A673 (cell line): ENCODE measurements at regions of chr3 and their contacts with region 1.

Region 1: GRCh38 chr3:85360742-85361387 is 402.1 kb downstream of the CADM2 start:
- DNase-seq: peak; percentile 70
- H3K4me3 ChIP-seq: no peak overlapping the region
- H3K27ac ChIP-seq: no peak overlapping the region
- H3K4me1 ChIP-seq: no peaks in the 10 kb centered on the region
- H3K27me3 ChIP-seq: no peaks in the 10 kb centered on the region
- CTCF ChIP-seq: peak; percentile 66

Region 2: GRCh38 chr3:84974347-84974746 is 386.5 kb before region 1 on chr3:
- CTCF ChIA-PET with region 1: no interaction called
- POLR2A ChIA-PET with region 1: no interaction called
- intact Hi-C with region 1: loop called (anchors 10 kb)
- DNase-seq: no peak
- H3K4me3 ChIP-seq: no peak overlapping the region
- H3K27ac ChIP-seq: no peak overlapping the region
- H3K4me1 ChIP-seq: no peaks in the 10 kb centered on the region
- H3K27me3 ChIP-seq: no peaks in the 10 kb centered on the region
- CTCF ChIP-seq: peak; percentile 34; the same call in 1 of the 2 replicates

Region 3: DNA sequence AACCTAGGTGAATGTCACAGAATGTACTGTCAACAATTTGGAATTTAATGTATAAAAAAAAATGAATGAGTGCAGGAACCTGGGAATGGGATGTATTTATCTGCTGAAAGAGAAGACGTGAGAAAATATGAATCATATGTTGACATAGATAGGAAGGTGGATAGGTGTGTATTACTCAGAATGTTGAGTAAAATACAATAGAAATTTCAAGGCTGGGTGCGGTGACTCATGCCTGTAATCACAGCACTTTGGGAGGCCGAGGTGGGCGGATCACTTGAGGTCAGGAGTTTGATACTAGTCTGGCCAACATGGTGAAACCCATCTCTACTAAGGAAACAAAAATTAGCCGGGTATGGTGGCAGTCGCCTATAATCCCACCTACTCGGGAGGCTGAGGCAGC is 199.3 kb before region 1 on chr3:
- CTCF ChIA-PET with region 1: no interaction called
- POLR2A ChIA-PET with region 1: no interaction called
- intact Hi-C with region 1: no loop called
- DNase-seq: no peak
- H3K4me3 ChIP-seq: no peak overlapping the region
- H3K27ac ChIP-seq: no peak overlapping the region
- H3K4me1 ChIP-seq: no peaks in the 10 kb centered on the region
- H3K27me3 ChIP-seq: no peaks in the 10 kb centered on the region
- CTCF ChIP-seq: no peak

Region 4: GRCh38 chr3:85330071-85330470 is 30.8 kb before region 1 on chr3:
- CTCF ChIA-PET with region 1: no interaction called
- POLR2A ChIA-PET with region 1: no interaction called
- intact Hi-C with region 1: no loop called
- DNase-seq: no peak
- H3K4me3 ChIP-seq: no peak overlapping the region
- H3K27ac ChIP-seq: no peak overlapping the region
- H3K4me1 ChIP-seq: no peaks in the 10 kb centered on the region
- H3K27me3 ChIP-seq: no peaks in the 10 kb centered on the region
- CTCF ChIP-seq: no peak

Region 5: DNA sequence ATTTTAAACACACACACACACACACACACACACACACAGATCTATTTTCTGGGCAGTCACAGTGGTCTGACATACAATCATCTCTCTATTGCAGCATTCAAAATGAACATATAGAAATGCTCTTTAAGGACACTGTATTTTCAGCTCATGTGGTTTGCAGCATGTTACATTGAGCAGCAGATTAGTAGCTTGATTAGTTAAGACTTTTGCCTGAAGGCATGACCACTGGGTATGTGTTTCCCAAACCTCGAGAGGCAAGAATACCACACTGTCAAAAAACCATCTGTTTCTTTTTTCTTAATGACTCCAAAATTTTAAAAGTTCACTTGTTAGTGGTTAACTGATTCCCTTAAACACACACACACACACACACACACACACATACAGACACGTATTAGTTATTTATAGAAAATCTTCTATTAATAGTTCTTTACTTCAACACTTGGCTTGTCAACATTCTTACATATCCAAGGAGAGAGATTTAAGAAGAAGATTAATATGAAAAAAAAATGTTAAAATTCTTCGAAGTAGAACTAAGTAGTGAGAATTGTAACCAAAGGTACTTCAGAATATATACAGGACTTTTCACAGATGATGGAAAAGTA is 116.1 kb after region 1 on chr3:
- CTCF ChIA-PET with region 1: no interaction called
- POLR2A ChIA-PET with region 1: no interaction called
- intact Hi-C with region 1: no loop called
- DNase-seq: no peak
- H3K4me3 ChIP-seq: no peak overlapping the region
- H3K27ac ChIP-seq: no peak overlapping the region
- H3K4me1 ChIP-seq: no peaks in the 10 kb centered on the region
- H3K27me3 ChIP-seq: no peaks in the 10 kb centered on the region
- CTCF ChIP-seq: no peak